Psoas muscle (tissue), 8 donors: ENCODE measurements at regions of chr19 and their contacts with region 1.

Region 1: DNA sequence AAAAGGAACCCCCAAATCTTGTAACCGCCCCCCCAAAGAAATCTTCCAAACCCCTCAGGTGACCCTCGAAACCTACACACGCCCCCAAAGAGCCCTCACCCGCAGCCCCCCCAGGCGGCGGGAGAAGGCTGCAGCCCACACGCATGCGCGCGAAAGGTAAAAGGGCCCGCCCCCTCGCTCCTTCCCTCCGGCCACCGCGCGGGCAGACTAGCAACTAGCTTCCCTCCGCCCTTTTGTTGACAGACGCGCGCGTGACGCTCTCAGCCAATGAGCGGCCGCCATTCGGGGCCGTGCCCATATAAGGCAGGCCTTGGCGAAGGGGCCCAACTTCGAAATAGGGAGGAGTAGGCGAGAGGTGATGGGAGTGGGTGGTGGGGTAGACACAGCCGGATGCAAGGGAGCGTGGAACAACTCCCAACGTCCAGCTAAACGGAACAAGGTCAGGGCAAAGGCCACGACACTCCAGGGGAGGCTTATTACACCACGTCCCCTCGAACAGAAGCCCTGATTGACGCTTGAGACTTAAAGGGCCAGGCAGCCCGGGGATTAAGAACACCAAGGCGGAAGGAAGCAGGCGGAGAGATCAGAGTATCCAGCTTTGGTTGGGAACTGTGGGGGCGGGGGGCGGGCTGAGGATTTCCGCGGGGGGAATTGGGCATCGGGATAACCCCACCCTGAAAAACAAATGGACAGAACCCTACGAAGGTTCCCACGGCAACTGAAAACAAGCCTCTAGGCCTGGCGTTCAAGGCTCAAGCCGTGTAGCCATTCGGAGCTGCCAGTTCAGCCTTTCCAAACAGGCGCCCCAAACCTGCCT is 13.3 kb downstream of the FBXO46 start:
- DNase-seq: peak; percentile 99 to 100
- ATAC-seq: peak; percentile 96 to 98 (median 97)
- H3K4me3 ChIP-seq: peak overlapping the region; percentile 84
- H3K27ac ChIP-seq: peak overlapping the region; percentile 94
- H3K4me1 ChIP-seq: peaks cover 14% of the 10 kb centered on the region
- H3K27me3 ChIP-seq: no peaks in the 10 kb centered on the region
- CTCF ChIP-seq: no peak

Region 2: DNA sequence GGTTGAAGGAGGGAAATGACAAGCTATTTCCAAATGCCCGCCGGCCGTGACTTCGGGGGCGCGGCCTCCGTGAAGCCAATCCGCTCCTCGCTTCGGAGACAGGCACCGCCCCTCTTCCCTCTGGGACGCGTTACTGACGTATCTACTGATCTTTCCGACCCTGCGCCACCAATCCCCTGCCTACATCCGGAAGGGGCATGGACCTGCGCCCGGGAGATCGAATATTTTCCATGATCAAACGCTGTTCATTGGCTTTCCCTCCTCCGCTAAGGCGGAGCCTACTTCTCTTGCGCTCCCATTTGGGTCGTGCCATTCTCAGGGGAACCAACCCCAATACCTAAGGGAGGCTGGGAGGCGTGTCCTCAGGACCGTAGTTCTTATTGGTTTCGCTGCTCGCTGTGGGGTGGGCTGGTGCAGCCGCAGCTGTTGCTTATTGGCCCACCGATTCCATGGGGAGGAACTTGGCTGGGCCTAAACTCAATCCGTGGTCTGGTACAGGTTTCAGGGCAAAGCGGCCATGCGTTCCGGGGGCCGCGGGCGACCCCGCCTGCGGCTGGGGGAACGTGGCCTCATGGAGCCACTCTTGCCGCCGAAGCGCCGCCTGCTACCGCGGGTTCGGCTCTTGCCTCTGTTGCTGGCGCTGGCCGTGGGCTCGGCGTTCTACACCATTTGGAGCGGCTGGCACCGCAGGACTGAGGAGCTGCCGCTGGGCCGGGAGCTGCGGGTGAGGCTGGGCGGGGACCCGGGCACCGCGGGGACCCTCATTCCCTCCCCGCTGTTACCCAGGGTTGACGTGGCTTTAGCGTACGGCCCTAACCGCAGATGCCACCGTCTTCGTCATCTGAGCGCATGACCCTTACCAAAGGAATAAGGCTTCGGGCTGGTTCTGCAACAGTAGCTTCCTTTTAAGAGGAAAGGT is 24.9 kb before region 1 on chr19 and contains the start of gene QPCTL:
- intact Hi-C with region 1: loop called in 1 of 2 experiments (anchors 1 kb)
- DNase-seq: peak; percentile 97 to 98
- ATAC-seq: peak; percentile 91 to 95 (median 93)
- H3K4me3 ChIP-seq: peak within 1 kb of the TSS; percentile 93
- H3K27ac ChIP-seq: peak within 1 kb of the TSS; percentile 93
- H3K4me1 ChIP-seq: peaks cover 11% of the 10 kb centered on the region
- H3K27me3 ChIP-seq: no peaks in the 10 kb centered on the region
- CTCF ChIP-seq: no peak
- total RNA-seq, gene QPCTL: 0.84 to 1.6 (median 1.1) TPM

Region 3: DNA sequence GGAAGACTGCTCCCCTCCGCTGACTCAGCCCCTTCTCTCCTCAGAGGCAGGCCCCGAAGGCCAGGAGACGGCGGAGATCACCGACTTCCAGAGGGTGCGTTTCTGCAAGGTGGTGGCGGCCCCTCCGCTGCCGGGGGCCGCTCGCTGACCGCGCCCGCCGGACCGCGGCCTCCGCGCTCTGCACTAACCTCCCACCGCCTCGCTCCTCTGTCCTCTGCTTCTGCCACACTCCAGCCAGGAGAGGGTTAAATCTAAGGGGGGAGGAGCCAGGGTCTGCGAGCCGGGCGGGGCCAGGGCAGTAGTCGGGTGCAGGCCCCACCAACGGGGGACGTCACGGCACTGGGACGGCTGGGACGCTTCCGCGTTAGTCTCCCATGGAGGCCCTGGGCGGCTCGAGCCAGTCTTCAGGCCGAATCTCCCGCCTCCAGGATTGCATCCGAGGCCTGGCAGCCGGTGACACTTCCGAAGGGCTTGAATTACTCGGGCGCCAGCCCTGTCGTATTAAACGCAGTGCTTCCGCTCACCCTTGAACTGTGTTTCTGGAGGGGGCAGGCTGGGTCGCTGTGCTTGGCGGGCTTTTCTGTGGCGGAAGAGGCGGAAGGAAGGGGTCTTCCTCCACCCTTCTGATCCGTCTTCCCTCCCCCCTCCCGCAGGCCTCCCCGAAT is 1556.1 kb after region 1 on chr19:
- intact Hi-C with region 1: no loop called
- DNase-seq: peak; percentile 92 to 95
- ATAC-seq: peak; percentile 46 to 68 (median 54)
- H3K4me3 ChIP-seq: peak overlapping the region; percentile 62
- H3K27ac ChIP-seq: peak overlapping the region; percentile 85
- H3K4me1 ChIP-seq: peaks cover 8% of the 10 kb centered on the region
- H3K27me3 ChIP-seq: no peaks in the 10 kb centered on the region
- CTCF ChIP-seq: no peak